Natural killer cell (primary cell): ENCODE measurements at regions of chr11 and their contacts with region 1.

Region 1: DNA sequence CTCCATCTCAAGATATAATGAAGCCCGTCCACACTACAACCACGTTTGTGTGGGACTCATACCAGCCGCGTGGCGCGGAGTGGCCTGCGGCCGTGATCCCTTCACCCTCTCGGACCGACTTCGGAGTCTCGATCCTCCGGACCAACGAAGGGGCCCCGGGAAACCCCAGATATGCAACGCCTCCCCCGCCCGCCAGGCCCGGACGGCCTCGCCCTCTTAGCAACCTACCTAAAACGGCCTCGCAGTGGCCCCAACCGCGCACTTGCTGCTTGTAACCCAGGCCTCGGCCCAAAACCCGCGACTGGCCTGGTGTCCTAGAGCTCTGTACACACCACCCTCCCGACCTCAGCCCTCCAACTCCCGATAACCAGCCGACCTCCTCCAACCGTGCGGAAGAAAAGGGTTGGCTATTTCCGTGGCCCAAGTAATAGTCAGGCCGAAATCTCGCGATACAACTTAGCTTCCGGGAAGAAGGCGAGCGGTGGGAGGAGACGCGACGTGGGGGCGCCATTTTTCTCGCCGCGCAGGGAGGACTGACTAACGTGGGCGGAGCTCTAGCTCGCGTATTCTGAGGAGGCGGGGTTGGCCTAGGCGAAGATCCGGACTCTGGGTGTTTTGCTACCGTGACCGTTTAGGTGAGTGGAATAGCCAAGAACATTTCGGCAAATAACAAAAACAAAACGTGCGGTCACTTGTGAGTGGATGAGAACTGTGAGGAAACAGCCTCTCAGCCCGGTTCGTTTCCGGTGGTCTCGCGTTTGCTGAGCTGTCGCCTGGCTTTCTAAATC is at the starts of genes C11orf54 and TAF1D:
- DNase-seq: peak; percentile 91 to 99
- ATAC-seq: peak; percentile 88 to 96 (median 88)
- H3K4me3 ChIP-seq: peak within 1 kb of the TSS; percentile 99
- H3K4me3 Mint-ChIP-seq: peak within 1 kb of the TSS; percentile 98
- H3K27ac ChIP-seq: peak within 1 kb of the TSS; percentile 98
- H3K27ac Mint-ChIP-seq: peak within 1 kb of the TSS; percentile 99 to 100
- H3K4me1 ChIP-seq: peaks cover 19% of the 10 kb centered on the region
- H3K4me1 Mint-ChIP-seq: peaks cover 58 to 68% of the 10 kb centered on the region in 2 donors
- H3K27me3 ChIP-seq: no peaks in the 10 kb centered on the region
- H3K27me3 Mint-ChIP-seq: no peaks in the 10 kb centered on the region
- CTCF ChIP-seq: no peak
- total RNA-seq, gene C11orf54: 15.5 to 25.0 (median 22.7) TPM
- total RNA-seq, gene TAF1D: 76.3 to 110 (median 109) TPM

Region 2: GRCh38 chr11:93659841-93660240 is 81.4 kb before region 1 on chr11:
- intact Hi-C with region 1: loop called (anchors 2 kb)
- DNase-seq: no peak
- ATAC-seq: no peak
- H3K4me3 ChIP-seq: no peak overlapping the region
- H3K4me3 Mint-ChIP-seq: no peak overlapping the region
- H3K27ac ChIP-seq: no peak overlapping the region
- H3K27ac Mint-ChIP-seq: no peak overlapping the region
- H3K4me1 ChIP-seq: peaks cover 7% of the 10 kb centered on the region
- H3K4me1 Mint-ChIP-seq: peaks cover 14 to 18% of the 10 kb centered on the region in 2 donors
- H3K27me3 ChIP-seq: no peaks in the 10 kb centered on the region
- H3K27me3 Mint-ChIP-seq: peaks cover 0 to 7% of the 10 kb centered on the region in 2 donors
- CTCF ChIP-seq: no peak

Region 3: DNA sequence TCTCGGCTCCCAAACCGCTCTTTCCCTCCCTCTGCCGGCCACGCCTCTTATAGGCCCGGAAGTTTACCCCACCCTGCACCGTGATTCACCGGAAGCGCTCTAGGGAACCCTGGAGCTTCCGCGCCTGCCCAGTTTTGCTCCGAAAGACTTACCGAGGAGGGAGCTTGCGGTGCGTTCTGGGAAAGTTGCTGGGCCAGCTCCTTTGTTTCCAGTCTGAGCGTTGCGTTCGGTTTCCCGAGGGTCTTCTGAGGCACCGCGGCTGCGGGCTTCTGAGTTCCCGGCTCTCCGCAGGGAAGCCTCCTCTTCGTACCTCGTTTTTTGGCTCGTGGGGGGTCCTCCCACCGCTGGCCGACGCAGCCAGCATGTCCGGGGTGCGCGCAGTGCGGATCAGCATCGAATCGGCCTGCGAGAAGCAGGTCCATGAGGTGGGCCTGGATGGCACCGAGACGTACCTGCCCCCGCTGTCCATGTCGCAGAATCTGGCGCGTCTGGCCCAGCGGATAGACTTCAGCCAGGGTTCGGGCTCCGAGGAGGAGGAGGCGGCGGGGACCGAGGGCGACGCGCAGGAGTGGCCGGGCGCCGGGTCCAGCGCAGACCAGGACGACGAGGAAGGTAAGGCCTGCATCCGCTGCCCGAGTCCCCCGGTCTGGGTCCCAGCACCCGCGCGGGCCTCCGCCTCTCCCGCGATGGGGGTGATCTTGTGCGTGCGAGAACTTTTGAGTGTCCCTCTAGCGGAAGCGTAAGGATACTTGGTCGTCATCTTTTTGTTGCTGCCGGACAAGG is 43.1 kb after region 1 on chr11 and contains the start of gene MED17:
- intact Hi-C with region 1: loop called (anchors 1 kb)
- DNase-seq: peak; percentile 74 to 94
- ATAC-seq: peak; percentile 88 to 94 (median 91)
- H3K4me3 ChIP-seq: peak within 1 kb of the TSS; percentile 94
- H3K4me3 Mint-ChIP-seq: peak within 1 kb of the TSS; percentile 99
- H3K27ac ChIP-seq: peak within 1 kb of the TSS; percentile 89
- H3K27ac Mint-ChIP-seq: peak within 1 kb of the TSS; percentile 83 to 91
- H3K4me1 ChIP-seq: peaks cover 29% of the 10 kb centered on the region
- H3K4me1 Mint-ChIP-seq: peaks cover 40 to 43% of the 10 kb centered on the region in 2 donors
- H3K27me3 ChIP-seq: no peaks in the 10 kb centered on the region
- H3K27me3 Mint-ChIP-seq: no peaks in the 10 kb centered on the region
- CTCF ChIP-seq: peak; percentile 27
- total RNA-seq, gene MED17: 48.8 to 71.5 (median 66.4) TPM

Region 4: GRCh38 chr11:94128746-94129511 is 387.6 kb after region 1 on chr11 and contains the start of gene PANX1:
- intact Hi-C with region 1: loop called (anchors 5 kb)
- DNase-seq: peak; percentile 61 to 93
- ATAC-seq: peak; percentile 80 to 90 (median 88)
- H3K4me3 ChIP-seq: peak within 1 kb of the TSS; percentile 84
- H3K4me3 Mint-ChIP-seq: no peak within 1 kb of the TSS
- H3K27ac ChIP-seq: peak within 1 kb of the TSS; percentile 85
- H3K27ac Mint-ChIP-seq: no peak within 1 kb of the TSS
- H3K4me1 ChIP-seq: peaks cover 31% of the 10 kb centered on the region
- H3K4me1 Mint-ChIP-seq: peaks cover 22 to 27% of the 10 kb centered on the region in 2 donors
- H3K27me3 ChIP-seq: no peaks in the 10 kb centered on the region
- H3K27me3 Mint-ChIP-seq: no peaks in the 10 kb centered on the region
- CTCF ChIP-seq: no peak
- total RNA-seq, gene PANX1: 8.6 to 13.6 (median 13.4) TPM